GM10248 (cell line): ENCODE measurements at regions of chr7 and their contacts with region 1.

Region 1: GRCh38 chr7:154996752-154997151 is 6.2 kb downstream of the PAXIP1 start:
- DNase-seq: no peak
- CTCF ChIP-seq: no peak

Region 2: GRCh38 chr7:154564676-154565075 is 432.1 kb before region 1 on chr7:
- CTCF ChIA-PET with region 1: no interaction called
- POLR2A ChIA-PET with region 1: no interaction called
- DNase-seq: no peak
- CTCF ChIP-seq: no peak

Region 3: DNA sequence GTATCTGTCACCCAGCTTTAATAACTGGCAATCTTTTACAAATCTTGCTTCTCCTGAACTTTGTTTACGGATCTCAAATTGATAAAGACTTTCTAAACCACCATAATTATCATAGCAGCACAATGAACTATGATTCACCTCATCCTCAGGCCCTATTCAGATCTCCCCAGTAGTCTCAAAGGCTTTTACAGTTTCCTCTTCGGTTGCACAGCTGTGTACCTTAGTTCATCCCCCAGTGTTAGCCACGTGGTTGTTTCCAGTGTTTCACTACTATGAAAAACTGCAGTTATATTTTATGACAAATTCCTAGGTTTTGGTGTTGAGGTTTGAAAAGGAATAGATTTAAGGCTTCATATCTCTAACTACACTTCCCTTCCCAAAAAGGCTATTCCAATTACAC is 18.7 kb before region 1 on chr7:
- CTCF ChIA-PET with region 1: interaction called, 12 read pairs
- POLR2A ChIA-PET with region 1: no interaction called
- DNase-seq: no peak
- CTCF ChIP-seq: no peak

Region 4: GRCh38 chr7:154984601-154985188 is 12.1 kb before region 1 on chr7:
- CTCF ChIA-PET with region 1: interaction called, 12 read pairs
- POLR2A ChIA-PET with region 1: no interaction called
- DNase-seq: no peak
- CTCF ChIP-seq: no peak

Region 5: GRCh38 chr7:155053002-155053401 is 56.2 kb after region 1 on chr7:
- CTCF ChIA-PET with region 1: no interaction called
- POLR2A ChIA-PET with region 1: no interaction called
- DNase-seq: no peak
- CTCF ChIP-seq: no peak